Heart left ventricle (tissue), 16 donors: ENCODE measurements at regions of chr11 and their contacts with region 1.

Region 1: GRCh38 chr11:22244986-22245592 is 52.2 kb downstream of the ANO5 start:
- DNase-seq: peak in 2 of 5 donors; percentile 26
- ATAC-seq: peak in 3 of 4 donors; percentile 69 to 80 (median 76)
- H3K4me3 ChIP-seq: no peak overlapping the region
- H3K27ac ChIP-seq: no peak overlapping the region
- H3K4me1 ChIP-seq: peaks cover 0 to 4% (median 0%) of the 10 kb centered on the region in 12 donors
- H3K27me3 ChIP-seq: no peaks in the 10 kb centered on the region
- CTCF ChIP-seq: peak; percentile 38 to 73 (median 53)
- POLR2A ChIP-seq: no peak

Region 2: DNA sequence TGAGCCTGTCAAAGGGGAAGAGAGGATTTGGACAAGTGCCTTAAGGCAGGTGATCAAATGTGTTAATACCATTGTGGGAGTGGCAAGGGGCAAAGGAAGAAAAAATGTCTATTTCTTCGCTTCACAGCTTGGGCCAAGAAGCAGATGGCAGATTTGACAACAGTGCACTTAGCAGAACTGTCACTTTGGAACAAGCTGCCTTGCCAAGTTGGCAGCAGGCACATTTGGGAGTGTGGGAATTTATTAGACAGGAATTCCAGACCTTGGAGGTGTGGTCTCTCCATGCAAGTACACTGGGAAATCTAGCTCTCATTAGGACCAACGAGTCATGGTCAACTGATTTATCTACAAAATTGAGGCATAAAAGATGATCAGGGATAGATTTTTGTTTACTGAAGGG is 1310.6 kb before region 1 on chr11:
- intact Hi-C with region 1: no loop called
- DNase-seq: no peak
- ATAC-seq: no peak
- H3K4me3 ChIP-seq: no peak overlapping the region
- H3K27ac ChIP-seq: no peak overlapping the region
- H3K4me1 ChIP-seq: no peaks in the 10 kb centered on the region
- H3K27me3 ChIP-seq: no peaks in the 10 kb centered on the region
- CTCF ChIP-seq: no peak
- POLR2A ChIP-seq: no peak

Region 3: GRCh38 chr11:22115470-22116029 is 129.5 kb before region 1 on chr11:
- intact Hi-C with region 1: no loop called
- DNase-seq: peak in 3 of 5 donors; percentile 13 to 48 (median 32)
- ATAC-seq: peak; percentile 92 to 99 (median 98)
- H3K4me3 ChIP-seq: no peak overlapping the region
- H3K27ac ChIP-seq: peak overlapping the region in 8 of 12 donors; percentile 15 to 73 (median 58)
- H3K4me1 ChIP-seq: peaks cover 0 to 15% (median 0%) of the 10 kb centered on the region in 12 donors
- H3K27me3 ChIP-seq: no peaks in the 10 kb centered on the region
- CTCF ChIP-seq: no peak
- POLR2A ChIP-seq: no peak

Region 4: DNA sequence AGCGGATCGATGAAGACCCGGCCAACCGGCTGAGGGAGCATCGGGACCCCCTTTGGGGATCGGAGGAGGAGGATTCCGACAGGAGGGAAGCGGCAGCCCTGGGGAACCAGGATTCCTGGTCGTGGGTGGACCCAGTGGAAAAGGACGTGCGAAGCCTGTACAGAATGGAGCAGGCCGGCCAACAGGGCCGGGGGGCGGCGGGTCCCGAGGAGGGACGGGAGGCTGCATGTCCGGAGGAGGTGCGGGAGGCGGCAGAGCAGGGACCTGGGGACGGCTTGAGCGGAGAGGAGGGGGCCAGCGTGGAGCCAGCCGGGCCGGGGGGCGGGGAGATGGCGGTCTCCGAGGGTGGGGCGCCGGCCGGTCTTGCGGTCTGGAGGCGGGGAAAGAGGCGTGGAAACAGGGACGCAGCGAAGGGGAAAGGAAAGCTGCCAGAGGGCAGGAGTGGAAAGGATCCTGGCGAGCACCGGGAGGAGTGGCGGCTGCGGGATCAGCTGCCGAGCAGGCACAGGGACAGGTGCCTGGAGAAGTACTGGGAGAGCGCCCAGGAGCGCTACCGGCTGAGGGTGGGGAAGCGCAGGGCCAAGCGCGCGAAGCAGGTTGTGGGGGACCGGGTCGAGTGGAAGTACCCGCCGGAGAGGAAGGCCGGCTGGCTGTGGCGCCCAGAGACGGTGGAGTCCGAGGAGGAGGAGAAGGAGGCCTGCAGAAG is 52.3 kb before region 1 on chr11 and contains the start of gene ANO5:
- intact Hi-C with region 1: loop called in 1 of 10 experiments (anchors 10 kb)
- DNase-seq: peak; percentile 80 to 87 (median 84)
- ATAC-seq: peak; percentile 89 to 94 (median 93)
- H3K4me3 ChIP-seq: peak within 1 kb of the TSS; percentile 48 to 83 (median 65)
- H3K27ac ChIP-seq: peak within 1 kb of the TSS; percentile 66 to 90 (median 82)
- H3K4me1 ChIP-seq: peaks cover 0 to 20% (median 2%) of the 10 kb centered on the region in 12 donors
- H3K27me3 ChIP-seq: peaks cover 0 to 8% (median 0%) of the 10 kb centered on the region in 9 donors
- CTCF ChIP-seq: peak in 1 of 12 donors; percentile 1
- POLR2A ChIP-seq: peak; percentile 46 to 80
- total RNA-seq, gene ANO5: 42.1 to 86.8 (median 61.1) TPM